Activated CD8-positive, alpha-beta T cell treated with anti-CD3 and anti-CD28 coated beads, Interleukin-2, amount 10 ng/mL, durations not matched to agents 7 days and 5 days (primary cell): ENCODE measurements at regions of chr17 and their contacts with region 1.

Region 1: DNA sequence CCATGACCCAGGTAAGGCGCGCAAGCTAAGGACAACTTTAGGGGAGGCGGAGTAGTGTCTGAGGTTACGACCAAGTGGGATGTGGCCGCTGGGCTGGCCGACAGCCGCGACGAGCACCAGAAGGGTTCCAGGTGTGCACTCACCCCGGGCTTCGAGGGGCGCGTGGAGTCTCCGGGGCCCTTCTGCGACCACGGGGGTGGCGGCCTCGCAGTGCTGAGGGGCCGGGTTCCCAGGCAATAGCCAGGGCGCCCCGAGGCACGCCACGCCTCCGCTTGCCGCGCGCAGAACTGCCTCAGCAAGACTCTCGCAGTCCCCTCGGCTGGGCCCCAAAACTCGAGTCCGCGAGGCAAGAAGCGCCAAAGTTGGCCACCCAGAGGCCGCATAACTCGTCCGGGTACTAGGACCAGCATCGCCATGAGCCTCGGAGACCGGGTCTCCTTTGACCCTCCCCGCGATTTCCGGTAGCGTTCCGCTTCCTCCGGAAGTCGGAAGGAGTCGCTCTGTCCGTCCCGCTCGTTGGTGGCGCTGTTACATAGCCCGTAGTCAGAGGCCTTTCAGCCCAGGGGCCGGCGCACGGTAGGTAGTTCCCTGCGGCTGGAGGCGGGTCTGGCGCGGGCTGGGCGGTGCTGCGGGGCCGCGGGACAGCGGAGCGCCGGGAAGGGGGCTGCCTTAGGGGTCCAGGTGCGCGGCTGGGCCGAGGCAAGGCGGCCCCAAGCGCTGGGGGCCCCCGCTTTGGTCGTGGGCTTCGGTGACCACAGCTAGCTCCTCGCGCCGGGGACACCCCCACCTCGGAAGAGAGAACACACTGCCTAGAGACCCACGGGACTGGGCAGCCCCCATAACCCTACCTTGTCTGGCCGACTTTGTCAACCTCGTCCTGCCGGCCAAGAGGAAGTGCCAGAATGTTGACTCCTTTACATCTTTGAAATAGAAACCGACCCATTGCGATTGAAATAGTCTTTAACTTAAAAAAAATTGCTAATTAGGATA is at the starts of genes ADPRM and SCO1:
- DNase-seq: peak; percentile 94
- ATAC-seq: peak; percentile 97
- H3K4me3 Mint-ChIP-seq: peak within 1 kb of the TSS; percentile 97
- H3K27ac Mint-ChIP-seq: peak within 1 kb of the TSS; percentile 97
- H3K4me1 Mint-ChIP-seq: peaks cover 60% of the 10 kb centered on the region
- H3K27me3 Mint-ChIP-seq: no peaks in the 10 kb centered on the region
- total RNA-seq, gene ADPRM: 10.3 to 10.4 TPM
- total RNA-seq, gene SCO1: 25.8 to 28.0 TPM

Region 2: GRCh38 chr17:10683853-10684252 is 13.5 kb before region 1 on chr17:
- CTCF ChIA-PET with region 1: interaction called, 49 read pairs
- POLR2A ChIA-PET with region 1: interaction called, 3 read pairs
- DNase-seq: no peak
- ATAC-seq: no peak
- H3K4me3 Mint-ChIP-seq: no peak overlapping the region
- H3K27ac Mint-ChIP-seq: no peak overlapping the region
- H3K4me1 Mint-ChIP-seq: peaks cover 3% of the 10 kb centered on the region
- H3K27me3 Mint-ChIP-seq: no peaks in the 10 kb centered on the region